ENCODE measurements at regions of chr1 and their contacts with region 1.

Region 1: DNA sequence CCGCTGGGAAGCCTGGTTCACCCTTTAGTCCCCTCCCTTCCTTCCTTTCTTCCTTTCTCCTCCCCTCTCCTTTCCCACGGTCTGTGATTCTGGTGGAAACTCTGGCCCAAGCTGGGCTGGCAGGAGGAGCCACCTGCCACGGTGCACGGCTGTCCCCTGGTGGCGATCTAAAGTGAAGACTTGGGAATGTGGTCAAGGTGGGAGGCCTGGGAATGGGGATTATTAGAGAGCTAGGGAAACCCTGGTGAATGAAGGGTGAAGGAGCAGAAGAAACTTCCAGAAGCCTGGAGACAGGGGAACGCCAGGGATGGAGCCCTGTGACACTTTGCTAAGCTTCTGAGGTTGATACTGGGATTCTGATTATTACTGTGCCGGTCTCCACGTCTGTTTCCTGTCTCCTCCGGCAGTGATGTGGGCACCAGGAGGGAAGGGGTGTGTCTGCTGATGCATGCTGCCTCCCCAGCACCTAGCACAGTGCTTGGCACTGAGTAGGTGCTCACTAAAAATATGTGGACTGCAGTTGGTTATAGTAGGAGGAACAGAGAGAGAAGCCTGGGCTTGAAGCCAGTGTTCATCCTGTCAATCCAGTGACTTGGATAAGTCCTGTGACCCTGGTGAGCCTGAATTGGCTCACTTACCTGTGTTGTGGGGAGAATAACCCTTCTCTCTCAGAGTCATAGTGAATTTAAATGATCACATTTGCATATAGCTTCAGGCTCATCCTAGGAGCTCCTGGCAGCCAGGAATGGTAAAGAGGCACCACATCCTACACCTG is 71.2 kb upstream of the NBPF3 start:
- DNase-seq: peak; percentile 87
- H3K4me3 Mint-ChIP-seq: no peak overlapping the region
- H3K27ac Mint-ChIP-seq: no peak overlapping the region
- H3K4me1 Mint-ChIP-seq: peaks cover 11% of the 10 kb centered on the region
- H3K27me3 Mint-ChIP-seq: no peaks in the 10 kb centered on the region
- CTCF ChIP-seq: peak; percentile 98

Region 2: DNA sequence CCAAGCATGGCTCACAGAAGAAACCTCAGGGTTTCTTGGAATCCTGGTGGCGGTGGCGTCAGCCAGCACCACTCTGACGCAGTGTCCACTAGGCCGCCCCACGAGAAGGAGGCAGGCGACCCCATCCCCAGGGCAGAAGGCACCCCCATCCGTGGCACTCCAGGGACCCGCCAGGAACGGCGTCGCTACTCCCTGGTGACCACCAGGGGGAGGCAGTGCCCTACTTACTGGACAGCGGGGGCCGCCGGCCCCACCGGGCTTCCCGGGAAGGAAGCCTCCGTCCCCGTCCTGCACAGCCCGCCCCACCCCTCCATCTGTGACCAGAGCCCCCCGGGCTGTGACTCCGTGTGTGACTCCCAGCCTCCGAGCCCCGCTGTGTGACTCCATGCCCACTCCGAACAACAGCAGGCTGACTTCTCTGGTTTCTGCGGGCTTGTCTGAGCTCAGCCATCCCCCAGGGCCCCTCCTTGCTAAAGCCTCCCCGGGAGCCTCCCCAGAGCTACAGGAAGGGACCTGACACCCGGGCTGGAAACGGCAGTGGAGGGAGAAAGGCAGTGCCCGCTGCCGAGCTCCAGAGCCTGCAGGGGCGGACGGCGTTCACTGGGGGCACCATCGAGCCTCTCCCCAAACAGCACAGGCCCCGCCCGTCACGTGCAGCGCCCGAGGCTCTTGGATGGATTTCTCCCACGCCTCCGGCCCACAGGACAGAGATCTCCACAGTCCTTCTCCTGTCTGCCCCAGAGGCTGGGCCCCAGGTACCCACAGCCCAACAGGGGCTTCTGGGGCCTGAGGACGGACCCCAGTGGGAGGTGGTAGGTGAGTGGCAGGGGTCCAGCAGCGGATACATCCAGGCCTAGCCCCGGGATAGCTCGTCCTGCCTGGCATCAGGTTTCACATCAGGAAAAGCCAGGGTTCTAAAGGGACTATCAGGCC is 672.0 kb before region 1 on chr1:
- CTCF ChIA-PET with region 1: interaction called, 4 read pairs
- POLR2A ChIA-PET with region 1: no interaction called
- intact Hi-C with region 1: loop called (anchors 10 kb)
- DNase-seq: peak; percentile 86
- H3K4me3 Mint-ChIP-seq: peak overlapping the region; percentile 82
- H3K27ac Mint-ChIP-seq: peak overlapping the region; percentile 76
- H3K4me1 Mint-ChIP-seq: peaks cover 11% of the 10 kb centered on the region
- H3K27me3 Mint-ChIP-seq: no peaks in the 10 kb centered on the region
- CTCF ChIP-seq: peak; percentile 94

Region 3: DNA sequence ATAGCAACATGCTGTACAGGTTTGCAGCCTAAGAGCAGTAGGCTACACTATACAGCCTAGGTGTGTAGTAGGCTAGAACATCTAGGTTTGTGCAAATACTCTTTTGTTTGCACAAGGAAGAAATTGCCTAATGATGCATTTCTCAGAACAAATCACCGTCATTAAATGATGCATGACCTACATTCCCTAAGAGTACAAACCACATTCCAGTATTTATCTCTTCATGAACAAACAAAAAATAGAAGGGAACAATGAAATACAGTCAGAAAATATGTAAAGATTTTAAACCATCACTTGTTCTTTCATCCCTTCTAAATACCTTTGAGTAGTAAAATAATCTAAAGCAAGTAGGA is 471.9 kb before region 1 on chr1:
- CTCF ChIA-PET with region 1: no interaction called
- POLR2A ChIA-PET with region 1: no interaction called
- intact Hi-C with region 1: no loop called
- DNase-seq: peak; percentile 59
- H3K4me3 Mint-ChIP-seq: no peak overlapping the region
- H3K27ac Mint-ChIP-seq: peak overlapping the region; percentile 82
- H3K4me1 Mint-ChIP-seq: peaks cover 12% of the 10 kb centered on the region
- H3K27me3 Mint-ChIP-seq: no peaks in the 10 kb centered on the region
- CTCF ChIP-seq: no peak

Region 4: DNA sequence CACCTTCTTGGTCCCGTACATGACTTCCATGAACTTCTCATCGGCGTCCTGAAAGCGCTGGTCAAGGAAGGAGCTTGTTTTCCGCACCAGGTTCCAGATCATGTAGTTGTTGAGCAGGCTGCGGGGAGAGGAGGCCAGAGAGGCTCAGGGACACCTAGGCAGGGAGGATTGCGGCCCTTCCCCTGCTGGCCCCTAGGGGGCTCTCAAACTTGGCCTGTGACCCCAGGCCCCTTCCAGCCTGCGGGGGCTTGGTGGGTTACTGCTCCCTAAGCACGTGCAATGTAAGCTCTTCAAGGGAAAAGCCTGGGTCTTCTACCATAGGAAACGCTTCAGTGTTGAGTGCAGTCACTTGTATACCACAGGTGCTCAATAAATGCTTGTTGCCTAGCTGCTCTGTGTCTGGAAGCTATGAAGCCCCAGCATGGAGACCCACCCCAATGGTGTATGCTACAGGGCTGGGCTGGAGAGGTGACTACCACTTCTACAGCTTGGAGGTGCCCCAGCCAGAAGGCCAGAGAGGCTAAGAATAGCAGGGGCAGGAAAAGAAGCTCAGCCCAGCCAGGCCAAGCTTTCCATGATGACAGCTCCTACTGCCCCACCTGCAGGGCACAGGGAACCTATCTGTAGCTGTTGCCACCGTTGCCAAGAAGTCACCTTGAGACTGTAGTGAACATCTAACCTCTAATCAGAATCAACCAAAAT is 123.6 kb before region 1 on chr1:
- CTCF ChIA-PET with region 1: interaction called, 283 read pairs
- POLR2A ChIA-PET with region 1: no interaction called
- intact Hi-C with region 1: no loop called
- DNase-seq: no peak
- H3K4me3 Mint-ChIP-seq: no peak overlapping the region
- H3K27ac Mint-ChIP-seq: no peak overlapping the region
- H3K4me1 Mint-ChIP-seq: no peaks in the 10 kb centered on the region
- H3K27me3 Mint-ChIP-seq: no peaks in the 10 kb centered on the region
- CTCF ChIP-seq: peak; percentile 8

Region 5: GRCh38 chr1:21334214-21335087 is 34.3 kb before region 1 on chr1:
- CTCF ChIA-PET with region 1: interaction called, 16 read pairs
- POLR2A ChIA-PET with region 1: interaction called, 3 read pairs
- intact Hi-C with region 1: no loop called
- DNase-seq: peak; percentile 88
- H3K4me3 Mint-ChIP-seq: peak overlapping the region; percentile 68
- H3K27ac Mint-ChIP-seq: peak overlapping the region; percentile 93
- H3K4me1 Mint-ChIP-seq: peaks cover 44% of the 10 kb centered on the region
- H3K27me3 Mint-ChIP-seq: no peaks in the 10 kb centered on the region
- CTCF ChIP-seq: peak; percentile 83

Region 6: GRCh38 chr1:21496886-21497285 is 128.2 kb after region 1 on chr1:
- CTCF ChIA-PET with region 1: no interaction called
- POLR2A ChIA-PET with region 1: no interaction called
- intact Hi-C with region 1: no loop called
- DNase-seq: no peak
- H3K4me3 Mint-ChIP-seq: no peak overlapping the region
- H3K27ac Mint-ChIP-seq: no peak overlapping the region
- H3K4me1 Mint-ChIP-seq: no peaks in the 10 kb centered on the region
- H3K27me3 Mint-ChIP-seq: no peaks in the 10 kb centered on the region
- CTCF ChIP-seq: no peak

Region 7: DNA sequence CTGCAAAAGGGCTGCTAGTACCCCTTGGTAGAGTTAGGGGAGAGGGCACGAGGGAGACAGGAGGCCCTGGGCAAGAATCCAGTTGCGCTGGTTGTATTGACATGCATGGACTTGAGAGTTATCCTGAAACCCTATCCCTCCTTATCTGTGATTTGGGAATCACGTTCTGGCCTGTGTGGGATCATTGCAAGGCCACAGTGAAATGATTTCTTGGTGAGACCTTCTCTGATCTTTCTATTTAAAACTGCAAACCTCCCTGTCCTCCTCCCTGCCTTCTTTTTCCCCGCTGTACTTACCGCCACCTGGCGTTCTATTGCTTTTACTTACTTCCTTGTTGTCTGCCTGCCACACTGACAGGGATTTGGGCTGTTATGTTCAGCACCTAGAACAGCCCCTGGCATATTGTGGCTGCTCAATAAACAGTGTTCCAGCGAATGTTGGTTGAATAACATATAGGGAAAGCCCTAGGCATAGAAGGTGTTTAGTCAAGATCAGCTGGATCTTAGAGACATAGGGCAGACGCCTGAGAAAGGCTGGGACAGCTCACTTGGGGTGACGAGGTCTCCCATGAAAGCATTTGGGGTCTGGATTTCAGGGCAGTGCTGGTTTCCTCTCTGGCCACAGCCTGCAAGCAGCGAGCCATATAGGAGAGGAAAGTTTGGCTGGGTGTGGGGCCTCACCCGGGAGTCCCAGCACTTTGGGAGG is 166.1 kb after region 1 on chr1:
- CTCF ChIA-PET with region 1: interaction called, 26 read pairs
- POLR2A ChIA-PET with region 1: interaction called, 3 read pairs
- intact Hi-C with region 1: loop called (anchors 1 kb)
- DNase-seq: peak; percentile 63
- H3K4me3 Mint-ChIP-seq: no peak overlapping the region
- H3K27ac Mint-ChIP-seq: no peak overlapping the region
- H3K4me1 Mint-ChIP-seq: no peaks in the 10 kb centered on the region
- H3K27me3 Mint-ChIP-seq: peaks cover 32% of the 10 kb centered on the region
- CTCF ChIP-seq: peak; percentile 49

Region 8: GRCh38 chr1:21659099-21659923 is 290.6 kb after region 1 on chr1:
- CTCF ChIA-PET with region 1: interaction called, 33 read pairs
- POLR2A ChIA-PET with region 1: interaction called, 3 read pairs
- intact Hi-C with region 1: no loop called
- DNase-seq: peak; percentile 62
- H3K4me3 Mint-ChIP-seq: peak overlapping the region; percentile 35
- H3K27ac Mint-ChIP-seq: no peak overlapping the region
- H3K4me1 Mint-ChIP-seq: no peaks in the 10 kb centered on the region
- H3K27me3 Mint-ChIP-seq: peaks cover 29% of the 10 kb centered on the region
- CTCF ChIP-seq: peak; percentile 99

Region 9: DNA sequence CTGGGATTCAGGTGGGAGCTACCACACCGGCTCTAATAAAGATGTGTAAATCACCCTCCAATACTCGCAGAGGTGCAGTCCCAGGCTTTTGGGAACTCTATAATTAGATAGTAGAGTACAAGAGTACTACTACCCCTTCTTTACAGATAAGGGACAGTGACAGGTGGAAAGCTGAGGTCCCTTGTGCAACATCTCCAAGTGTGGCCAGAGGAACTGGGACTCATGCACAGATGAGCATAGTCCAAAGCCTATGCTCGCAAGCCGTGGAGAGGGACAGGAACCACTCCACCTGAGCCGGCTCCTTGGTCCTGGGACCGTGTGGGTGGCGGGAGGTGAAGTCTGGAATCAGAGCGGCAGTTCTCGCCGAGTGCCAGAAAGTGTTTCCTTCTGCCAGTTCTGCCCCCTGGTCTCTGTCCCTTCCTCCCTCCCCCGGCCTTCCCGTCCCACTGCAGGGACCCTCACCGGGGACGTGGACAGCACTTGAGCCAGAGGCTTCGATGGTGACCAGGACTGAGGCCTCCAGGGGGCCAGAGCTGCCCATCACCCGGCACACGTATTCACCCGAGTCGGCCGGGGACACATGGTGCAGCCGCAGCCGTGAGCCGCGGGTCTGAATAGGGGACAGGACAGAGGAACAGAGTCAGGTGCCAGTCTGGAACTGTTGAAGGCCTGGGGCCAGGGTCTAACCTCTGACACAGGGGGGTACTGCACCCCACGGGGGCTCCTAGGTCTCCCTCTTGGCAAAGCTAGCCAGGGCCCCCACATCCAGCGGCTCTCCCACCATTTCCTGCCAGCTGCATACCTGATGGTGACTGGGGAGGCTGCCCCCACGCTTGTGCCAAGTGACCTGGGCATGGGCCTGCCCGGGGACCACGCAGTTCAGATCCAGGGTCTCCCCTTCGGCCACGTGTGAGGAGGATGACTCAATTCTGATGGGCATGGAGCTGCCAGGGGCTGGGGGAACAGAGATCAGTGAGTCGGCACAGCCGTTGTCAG is 477.2 kb after region 1 on chr1:
- CTCF ChIA-PET with region 1: no interaction called
- POLR2A ChIA-PET with region 1: no interaction called
- intact Hi-C with region 1: no loop called
- DNase-seq: no peak
- H3K4me3 Mint-ChIP-seq: no peak overlapping the region
- H3K27ac Mint-ChIP-seq: no peak overlapping the region
- H3K4me1 Mint-ChIP-seq: no peaks in the 10 kb centered on the region
- H3K27me3 Mint-ChIP-seq: no peaks in the 10 kb centered on the region
- CTCF ChIP-seq: no peak

Measured in MCF 10A (cell line).